ENCODE measurements at regions of chr5 and their contacts with region 1.

Region 1: DNA sequence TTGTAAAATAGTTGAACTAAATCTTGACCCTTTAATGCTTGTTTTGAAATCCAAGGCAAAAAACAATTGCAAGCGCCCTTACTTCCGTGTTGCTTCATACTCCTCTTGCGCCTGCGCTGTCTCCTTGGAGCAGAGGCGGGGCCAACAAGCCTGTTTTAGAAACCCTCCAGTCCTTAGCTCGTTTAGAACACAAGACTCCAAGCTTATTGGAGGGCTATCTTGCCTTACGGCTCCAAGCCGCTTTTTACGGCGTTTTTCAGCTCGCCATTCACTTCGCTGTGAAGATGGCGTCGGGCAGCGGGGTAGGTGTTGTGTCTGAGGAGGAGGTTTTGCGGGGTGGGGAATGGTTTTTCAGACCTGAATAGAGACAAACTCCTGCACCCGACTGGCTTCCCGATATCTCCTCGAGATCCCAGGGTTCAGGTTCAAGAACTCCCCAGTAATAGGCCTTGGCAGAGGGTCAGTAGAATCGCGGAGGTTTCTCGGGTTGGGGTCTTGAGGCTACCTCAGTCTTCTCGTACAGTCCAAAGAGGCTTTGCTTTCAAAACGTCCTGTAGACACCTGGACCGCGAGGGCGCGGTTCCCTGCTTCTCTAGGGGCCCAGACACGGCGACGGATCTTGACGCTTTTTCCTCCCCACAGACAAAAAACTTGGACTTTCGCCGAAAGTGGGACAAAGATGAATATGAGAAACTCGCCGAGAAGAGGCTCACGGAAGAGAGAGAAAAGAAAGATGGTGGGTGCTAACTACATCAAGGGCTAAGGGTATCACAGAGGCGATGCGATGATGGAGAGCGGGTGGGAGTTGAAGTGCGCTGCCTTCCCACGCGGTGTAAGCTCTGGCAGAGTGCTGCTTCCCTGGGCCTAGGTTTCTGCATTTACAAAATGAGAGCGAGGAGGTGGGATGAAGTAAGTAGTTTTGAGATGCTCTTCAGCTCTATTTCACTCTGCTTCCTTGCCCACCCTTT is at the start of gene ZMAT2:
- DNase-seq: peak; percentile 95 to 96
- ATAC-seq: peak; percentile 99
- H3K4me3 ChIP-seq: peak within 1 kb of the TSS; percentile 82
- H3K27ac ChIP-seq: peak within 1 kb of the TSS; percentile 77
- H3K4me1 ChIP-seq: peaks cover 12% of the 10 kb centered on the region
- H3K27me3 ChIP-seq: no peaks in the 10 kb centered on the region
- CTCF ChIP-seq: no peak
- total RNA-seq, gene ZMAT2: 44.7 to 54.5 (median 47.5) TPM

Region 2: GRCh38 chr5:140664359-140665119 is 35.9 kb before region 1 on chr5 and contains the start of gene WDR55:
- intact Hi-C with region 1: loop called in 1 of 2 experiments (anchors 5 kb)
- DNase-seq: peak; percentile 97 to 98
- ATAC-seq: peak; percentile 98 to 99 (median 98)
- H3K4me3 ChIP-seq: peak within 1 kb of the TSS; percentile 85
- H3K27ac ChIP-seq: peak within 1 kb of the TSS; percentile 89
- H3K4me1 ChIP-seq: peaks cover 17% of the 10 kb centered on the region
- H3K27me3 ChIP-seq: no peaks in the 10 kb centered on the region
- CTCF ChIP-seq: no peak
- total RNA-seq, gene WDR55: 9.9 to 20.9 (median 13.3) TPM

Region 3: DNA sequence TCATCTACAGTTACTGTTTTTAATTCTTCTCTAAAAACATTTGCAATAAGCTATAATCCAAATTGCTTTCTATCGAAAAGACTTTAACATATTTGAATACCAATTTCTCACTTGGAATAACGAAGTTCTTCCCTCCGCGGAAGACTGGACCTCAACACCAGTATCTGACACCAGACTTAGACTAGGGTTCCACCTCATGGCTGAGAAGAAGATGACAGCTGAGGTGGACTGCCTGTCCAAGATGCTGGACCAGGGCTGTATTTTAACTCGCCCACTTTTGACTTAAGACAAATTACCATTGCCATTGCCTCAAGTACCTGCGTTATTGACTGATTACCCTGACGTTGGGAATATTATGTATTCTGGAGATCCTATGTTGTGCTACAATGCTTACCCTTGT is 33.9 kb after region 1 on chr5:
- intact Hi-C with region 1: no loop called
- DNase-seq: no peak
- ATAC-seq: peak; percentile 67 to 84 (median 78)
- H3K4me3 ChIP-seq: no peak overlapping the region
- H3K27ac ChIP-seq: no peak overlapping the region
- H3K4me1 ChIP-seq: no peaks in the 10 kb centered on the region
- H3K27me3 ChIP-seq: peaks cover 0 to 6% (median 3%) of the 10 kb centered on the region in 3 donors
- CTCF ChIP-seq: peak; percentile 59

Measured in psoas muscle (tissue), 8 donors.